GM12878 (cell line): ENCODE measurements at regions of chr6 and their contacts with region 1.

Region 1: DNA sequence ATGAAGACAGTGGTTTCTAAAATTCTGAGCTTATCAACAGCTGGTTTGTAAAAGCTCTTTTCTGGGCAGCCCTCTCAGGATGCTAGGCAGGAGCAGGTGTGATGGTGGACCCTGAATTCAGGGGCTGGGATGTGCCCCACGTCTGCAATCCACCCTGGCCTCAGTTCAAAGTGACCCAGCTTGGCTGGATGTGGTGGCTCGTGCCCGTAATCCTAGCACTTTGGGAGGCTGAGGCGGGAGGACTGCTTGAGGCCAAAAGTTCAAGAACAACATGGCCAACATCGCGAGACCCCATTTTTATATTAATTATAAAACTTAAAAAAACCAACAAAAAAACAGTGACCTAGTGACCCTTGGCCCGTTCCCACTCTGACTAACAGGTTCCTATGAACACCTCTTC is 14.2 kb downstream of the RPL10A start:
- DNase-seq: no peak
- ATAC-seq: no peak
- H3K4me3 ChIP-seq: no peak overlapping the region
- H3K27ac ChIP-seq: no peak overlapping the region
- H3K4me1 ChIP-seq: no peaks in the 10 kb centered on the region
- H3K27me3 ChIP-seq: no peaks in the 10 kb centered on the region; a peak in 2 of 4 replicates
- CTCF ChIP-seq: no peak
- EP300 ChIP-seq: no peak
- POLR2A ChIP-seq: no peak
- RAD21 ChIP-seq: no peak

Region 2: GRCh38 chr6:35468181-35468979 is 14.1 kb before region 1 on chr6 and contains the start of gene RPL10A:
- CTCF ChIA-PET with region 1: interaction called, 11 read pairs
- POLR2A ChIA-PET with region 1: interaction called, 3 read pairs
- RAD21 ChIA-PET with region 1: interaction called, 3 read pairs
- SMC1A ChIA-PET with region 1: no interaction called
- in situ Hi-C with region 1: no loop called
- intact Hi-C with region 1: no loop called
- DNase-seq: peak; percentile 94
- ATAC-seq: peak; percentile 89
- H3K4me3 ChIP-seq: peak within 1 kb of the TSS; percentile 99
- H3K27ac ChIP-seq: peak within 1 kb of the TSS; percentile 87
- H3K4me1 ChIP-seq: no peaks in the 10 kb centered on the region
- H3K27me3 ChIP-seq: no peaks in the 10 kb centered on the region
- CTCF ChIP-seq: peak; percentile 98 to 100 (median 99); a peak in 5 of 6 replicates
- EP300 ChIP-seq: no peak
- POLR2A ChIP-seq: peak; percentile 100
- RAD21 ChIP-seq: peak; percentile 79
- polyA plus RNA-seq, gene RPL10A: 2,399 to 2,699 TPM